Calu3 (cell line): ENCODE measurements at regions of chr18 and their contacts with region 1.

Region 1: GRCh38 chr18:54607215-54607934 is 16.3 kb downstream of the DYNAP start:
- DNase-seq: peak; percentile 60
- H3K4me3 Mint-ChIP-seq: peak overlapping the region; percentile 49
- H3K27ac Mint-ChIP-seq: peak overlapping the region; percentile 81
- H3K4me1 Mint-ChIP-seq: peaks cover 38% of the 10 kb centered on the region
- H3K27me3 Mint-ChIP-seq: no peaks in the 10 kb centered on the region
- CTCF ChIP-seq: no peak

Region 2: DNA sequence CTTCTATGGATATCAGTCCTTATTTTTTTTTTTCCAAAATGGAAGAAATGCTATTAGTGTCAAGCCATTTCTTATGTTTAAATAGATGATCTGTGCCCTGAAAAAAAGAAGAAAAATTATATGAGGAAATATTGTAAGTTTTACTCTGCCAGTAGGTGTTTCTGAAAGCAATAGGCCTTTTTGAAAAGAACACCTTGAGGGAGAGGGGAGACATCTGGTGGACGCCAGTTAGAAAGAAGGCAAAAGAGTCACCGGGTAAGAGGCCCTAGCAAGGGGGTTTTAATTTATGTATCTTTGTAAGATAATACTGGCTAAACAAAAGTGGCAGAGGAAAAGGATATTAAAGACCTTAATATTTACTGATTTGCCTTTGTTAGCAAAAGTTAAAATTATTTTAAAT is 39.8 kb after region 1 on chr18:
- CTCF ChIA-PET with region 1: no interaction called
- intact Hi-C with region 1: loop called (anchors 5 kb)
- DNase-seq: peak; percentile 48
- H3K4me3 Mint-ChIP-seq: no peak overlapping the region
- H3K27ac Mint-ChIP-seq: peak overlapping the region; percentile 4
- H3K4me1 Mint-ChIP-seq: no peaks in the 10 kb centered on the region
- H3K27me3 Mint-ChIP-seq: no peaks in the 10 kb centered on the region
- CTCF ChIP-seq: peak; percentile 56